ENCODE measurements at regions of chr5 and their contacts with region 1.

Region 1: DNA sequence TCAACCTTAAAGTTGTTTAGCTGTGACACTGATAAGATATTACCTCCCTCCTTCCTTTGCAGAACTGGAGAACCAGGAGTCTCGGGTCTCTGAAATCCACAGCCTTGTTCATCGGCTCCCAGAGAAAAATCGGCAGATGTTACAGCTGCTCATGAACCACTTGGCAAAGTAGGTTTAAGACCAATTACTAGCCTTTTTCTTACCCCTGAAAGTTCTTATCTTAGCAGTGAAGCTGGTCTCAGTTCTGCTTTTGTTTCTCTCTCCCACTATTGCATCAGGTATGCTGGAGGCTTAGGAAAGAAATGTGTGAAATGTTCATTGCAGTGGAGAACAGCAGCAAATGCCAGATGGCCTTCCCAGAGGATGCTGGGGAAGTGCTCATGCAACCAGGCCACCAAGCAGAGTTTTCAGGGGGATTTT is 287.4 kb downstream of the ARHGAP26 start:
- DNase-seq: no peak
- H3K4me3 Mint-ChIP-seq: no peak overlapping the region
- H3K27ac Mint-ChIP-seq: peak overlapping the region; percentile 97
- H3K4me1 Mint-ChIP-seq: peaks cover 77% of the 10 kb centered on the region
- H3K27me3 Mint-ChIP-seq: no peaks in the 10 kb centered on the region

Region 2: DNA sequence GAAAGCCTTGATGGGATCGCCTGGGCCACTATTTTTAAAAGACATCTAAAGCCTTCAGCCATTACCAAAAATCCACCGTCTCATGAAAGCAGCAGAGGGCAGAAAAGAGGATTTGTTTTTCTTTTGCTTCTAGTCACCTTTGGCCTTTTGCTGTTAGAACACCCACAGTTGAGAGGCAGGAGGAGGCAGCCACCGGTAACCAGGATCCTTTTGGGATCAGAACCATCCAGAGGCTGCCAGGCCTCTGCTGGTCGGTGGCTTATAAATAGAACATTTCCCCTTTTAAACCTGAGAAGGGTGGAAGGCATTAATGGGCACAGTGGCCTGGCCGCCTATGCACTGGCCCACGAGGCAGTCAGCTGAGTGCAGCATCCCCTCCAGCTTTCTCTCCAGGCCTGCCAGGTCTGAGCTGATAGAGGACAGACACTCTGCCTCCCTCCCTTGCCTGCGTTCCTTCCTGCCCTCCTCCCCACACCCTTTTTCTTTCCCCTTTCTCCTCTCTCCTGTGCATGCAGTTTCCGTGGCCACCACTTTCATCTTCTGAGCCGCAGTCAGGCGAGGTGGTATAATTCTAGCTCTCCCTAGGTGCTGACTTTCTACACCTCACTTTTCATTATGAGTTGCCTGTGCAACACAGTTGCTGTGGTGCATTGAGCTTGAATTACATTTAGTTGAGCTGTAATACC is 34.0 kb before region 1 on chr5:
- intact Hi-C with region 1: loop called (anchors 1 kb)
- DNase-seq: peak; percentile 50
- H3K4me3 Mint-ChIP-seq: peak overlapping the region; percentile 4
- H3K27ac Mint-ChIP-seq: peak overlapping the region; percentile 45
- H3K4me1 Mint-ChIP-seq: peaks cover 67% of the 10 kb centered on the region
- H3K27me3 Mint-ChIP-seq: peaks cover 4% of the 10 kb centered on the region

Region 3: DNA sequence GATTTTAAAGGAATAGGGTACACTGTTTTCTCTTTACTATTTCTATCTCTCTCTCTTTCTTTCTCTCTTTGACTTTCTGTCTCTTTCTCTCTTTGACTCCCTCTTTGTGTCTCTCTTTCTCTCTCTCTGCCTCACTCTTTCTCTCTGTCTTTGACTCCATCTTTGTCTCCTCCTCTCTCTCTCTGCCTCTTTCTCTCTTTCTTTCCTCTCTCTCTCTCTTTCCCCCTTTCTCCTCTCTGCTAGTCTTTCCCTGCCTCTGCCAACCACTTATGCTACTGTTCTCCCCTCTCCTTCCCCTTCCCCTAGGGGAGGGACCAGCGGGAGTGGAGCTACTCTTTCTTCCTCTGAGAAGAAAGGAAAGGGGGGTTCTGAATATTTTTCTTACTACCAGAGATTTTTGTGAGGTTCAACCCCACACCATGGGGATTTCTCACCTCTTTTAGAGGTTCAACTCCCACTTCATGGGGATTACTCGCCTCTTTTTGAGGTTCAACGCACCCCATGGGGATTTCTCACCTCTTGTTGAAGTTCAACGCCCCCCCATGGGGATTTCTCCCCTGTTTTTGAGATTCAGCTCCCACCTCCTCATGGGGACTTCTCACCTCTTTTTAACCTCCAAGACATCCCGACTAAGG is 36.0 kb after region 1 on chr5:
- intact Hi-C with region 1: loop called (anchors 2 kb)
- DNase-seq: no peak
- H3K4me3 Mint-ChIP-seq: peak overlapping the region; percentile 38
- H3K27ac Mint-ChIP-seq: peak overlapping the region; percentile 73
- H3K4me1 Mint-ChIP-seq: peaks cover 44% of the 10 kb centered on the region
- H3K27me3 Mint-ChIP-seq: no peaks in the 10 kb centered on the region

Region 4: DNA sequence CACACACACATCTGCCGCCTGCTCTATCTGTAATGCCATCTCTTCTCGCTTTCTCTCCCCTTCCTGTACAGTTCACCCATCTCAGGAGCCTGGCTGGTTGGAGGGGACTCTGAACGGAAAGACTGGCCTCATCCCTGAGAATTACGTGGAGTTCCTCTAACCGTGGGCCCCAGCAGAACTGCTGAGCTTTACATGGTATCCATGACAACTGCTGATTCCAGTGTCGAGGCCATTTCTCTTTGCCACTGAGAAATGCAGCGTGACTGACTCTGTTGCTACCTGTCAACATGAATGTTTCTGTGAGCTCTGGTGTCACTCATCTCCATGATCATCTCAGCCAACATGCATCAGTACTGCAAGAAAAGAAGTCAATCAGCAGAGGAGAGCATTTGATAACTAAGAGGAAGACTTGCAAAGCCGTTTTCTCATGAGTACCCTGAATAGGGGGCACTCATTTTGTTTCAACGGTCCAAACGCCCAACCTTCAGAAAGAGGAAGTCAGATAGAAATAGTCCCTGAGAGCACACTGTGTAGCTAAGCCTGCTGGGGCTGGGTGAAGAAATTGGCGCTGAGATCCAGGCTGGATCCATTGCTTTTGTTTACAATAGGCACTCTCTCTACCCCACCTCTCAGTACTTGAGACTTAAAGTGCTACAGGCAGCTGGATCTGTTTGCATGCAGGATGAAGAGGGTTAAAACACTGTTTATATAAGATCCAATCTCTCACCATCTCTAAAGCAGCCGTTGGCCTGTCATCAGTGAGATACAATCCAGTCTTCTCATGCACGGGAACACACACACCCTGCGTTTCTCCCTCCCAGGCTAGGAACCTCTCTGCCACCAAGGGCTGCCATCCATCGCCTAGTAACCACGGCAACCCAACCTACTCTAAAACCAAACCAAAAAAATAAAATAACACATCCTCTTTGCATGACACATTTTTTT is 165.0 kb after region 1 on chr5:
- intact Hi-C with region 1: loop called (anchors 2 kb)
- DNase-seq: peak; percentile 59
- H3K4me3 Mint-ChIP-seq: peak overlapping the region; percentile 60
- H3K27ac Mint-ChIP-seq: peak overlapping the region; percentile 92
- H3K4me1 Mint-ChIP-seq: peaks cover 77% of the 10 kb centered on the region
- H3K27me3 Mint-ChIP-seq: no peaks in the 10 kb centered on the region